Endothelial cell of umbilical vein (primary cell): ENCODE measurements at regions of chr6 and their contacts with region 1.

Region 1: DNA sequence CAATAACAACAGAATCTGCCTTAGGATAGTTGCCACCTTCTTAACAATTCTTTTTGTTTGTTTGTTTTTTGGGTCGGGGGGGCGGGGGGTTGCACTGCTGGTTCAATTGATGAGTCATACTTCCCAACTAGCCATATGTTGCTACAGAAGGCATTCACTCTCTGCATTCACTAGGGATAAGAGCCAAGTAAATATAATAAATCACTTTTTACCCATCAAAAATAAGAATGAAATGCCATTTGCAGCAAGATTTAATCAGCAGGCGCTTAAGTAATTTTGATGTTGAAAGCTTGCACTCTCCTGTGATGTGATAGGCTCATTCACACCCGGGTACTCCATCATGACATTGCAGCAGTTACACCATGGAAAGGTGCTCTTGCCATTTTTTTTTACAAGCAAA is 209.8 kb downstream of the HIVEP2 start:
- DNase-seq: peak; percentile 90
- H3K4me3 ChIP-seq: no peak overlapping the region
- H3K27ac ChIP-seq: no peak overlapping the region
- H3K4me1 ChIP-seq: peaks cover 13% of the 10 kb centered on the region
- H3K27me3 ChIP-seq: no peaks in the 10 kb centered on the region
- CTCF ChIP-seq: no peak
- POLR2A ChIP-seq: no peak

Region 2: DNA sequence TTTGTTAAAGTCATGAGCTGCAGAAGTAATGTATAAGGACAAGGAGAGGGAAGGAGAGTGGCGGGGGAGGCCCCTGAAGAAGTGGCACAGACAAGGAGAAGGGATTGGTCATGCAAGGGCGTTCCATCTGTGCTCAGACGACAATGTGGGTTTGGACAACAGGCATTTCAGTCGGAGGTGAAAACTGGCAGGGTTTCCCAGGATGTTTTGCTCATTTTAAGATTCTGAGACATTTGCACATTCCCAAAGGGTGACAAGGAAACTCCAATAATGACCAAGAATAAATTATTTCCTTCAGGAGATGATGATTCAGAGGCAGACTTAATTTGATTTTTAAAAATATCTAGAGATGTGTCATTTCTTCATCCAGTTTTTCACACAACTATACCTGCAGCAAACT is 28.0 kb after region 1 on chr6:
- CTCF ChIA-PET with region 1: interaction called, 3 read pairs
- POLR2A ChIA-PET with region 1: no interaction called
- dilution Hi-C with region 1: no loop called
- intact Hi-C with region 1: loop called (anchors 2 kb)
- DNase-seq: peak; percentile 63
- H3K4me3 ChIP-seq: no peak overlapping the region
- H3K27ac ChIP-seq: peak overlapping the region; percentile 56
- H3K4me1 ChIP-seq: peaks cover 16% of the 10 kb centered on the region
- H3K27me3 ChIP-seq: no peaks in the 10 kb centered on the region
- CTCF ChIP-seq: no peak
- POLR2A ChIP-seq: no peak